ENCODE measurements at regions of chr6 and their contacts with region 1.

Region 1: DNA sequence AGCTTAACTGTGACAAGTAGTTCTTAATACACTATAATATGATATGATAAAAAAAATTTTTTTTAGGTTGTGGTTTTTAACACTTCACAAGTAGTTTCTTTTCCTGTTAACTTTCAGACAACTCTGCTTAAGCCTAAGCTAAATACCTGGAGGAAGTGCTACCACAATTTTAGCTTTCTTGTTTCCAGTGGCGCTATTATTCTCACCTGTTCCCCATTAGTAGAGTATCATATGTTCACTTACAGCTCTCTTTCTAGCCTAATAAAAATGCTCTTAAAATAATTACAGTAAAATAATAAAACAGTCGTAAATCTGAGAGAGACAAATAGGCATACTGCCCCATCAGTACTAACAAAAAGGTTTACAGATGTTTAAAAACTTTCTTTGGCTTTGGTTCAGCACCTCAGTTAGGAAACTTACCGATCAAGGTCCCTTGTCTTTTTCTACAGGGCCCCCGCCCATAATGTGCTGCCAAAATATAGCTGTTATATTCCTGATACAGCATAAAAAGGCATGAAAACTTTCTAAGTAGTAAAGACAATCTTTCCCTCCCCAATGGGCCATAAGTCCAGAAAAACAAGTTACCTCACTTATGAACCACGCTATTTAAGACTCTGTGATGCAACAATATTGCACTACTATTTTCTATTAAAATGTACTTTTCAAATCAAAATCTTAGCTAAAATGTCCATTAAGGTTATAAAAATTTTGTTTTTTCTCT is 57.9 kb downstream of the SESN1 start:
- DNase-seq: no peak

Region 2: GRCh38 chr6:108689247-108690161 is 347.2 kb before region 1 on chr6:
- CTCF ChIA-PET with region 1: no interaction called
- POLR2A ChIA-PET with region 1: no interaction called
- DNase-seq: no peak

Region 3: GRCh38 chr6:109009236-109009961 is 27.3 kb before region 1 on chr6:
- CTCF ChIA-PET with region 1: no interaction called
- POLR2A ChIA-PET with region 1: interaction called, 15 read pairs
- DNase-seq: peak; percentile 86

Region 4: GRCh38 chr6:109349419-109350078 is 312.8 kb after region 1 on chr6:
- CTCF ChIA-PET with region 1: no interaction called
- POLR2A ChIA-PET with region 1: no interaction called
- DNase-seq: no peak